Heart right ventricle (tissue), 16 donors: ENCODE measurements at regions of chr22 and their contacts with region 1.

Region 1: DNA sequence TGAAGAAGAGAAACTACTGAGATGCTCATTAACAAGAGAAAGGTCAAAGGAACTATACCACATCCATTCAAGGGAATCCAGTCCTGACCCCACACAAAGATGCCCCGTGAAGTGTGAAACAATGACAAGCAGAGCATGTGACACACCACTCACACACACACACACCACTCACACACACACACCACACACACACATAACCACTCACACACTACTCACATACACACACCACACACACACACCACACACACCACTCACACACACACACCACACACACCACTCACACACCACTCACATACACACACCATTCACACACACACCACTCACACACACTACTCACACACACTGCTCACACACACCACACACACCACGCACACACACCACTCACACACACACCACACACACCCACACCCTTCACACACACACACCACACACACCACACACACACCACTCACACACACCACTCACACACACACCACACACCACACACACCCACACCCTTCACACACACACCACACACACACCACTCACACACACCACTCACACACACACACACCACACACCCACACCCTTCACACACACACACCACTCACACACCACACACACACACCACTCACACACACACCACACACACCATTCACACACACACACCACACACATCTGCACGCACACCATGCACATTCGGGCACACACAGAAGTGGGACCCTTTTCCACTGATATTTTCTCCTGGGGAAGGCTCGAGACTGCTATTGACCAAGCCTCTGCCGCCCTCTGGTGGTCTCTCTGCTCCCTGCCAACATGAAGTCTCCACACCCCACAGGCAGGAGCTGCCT is 32.0 kb upstream of the COMT start:
- DNase-seq: peak; percentile 83 to 84
- ATAC-seq: peak; percentile 82 to 95 (median 91)
- H3K4me3 ChIP-seq: no peak overlapping the region
- H3K27ac ChIP-seq: no peak overlapping the region
- H3K4me1 ChIP-seq: no peaks in the 10 kb centered on the region
- H3K27me3 ChIP-seq: no peaks in the 10 kb centered on the region
- CTCF ChIP-seq: peak; percentile 69 to 95 (median 84)

Region 2: DNA sequence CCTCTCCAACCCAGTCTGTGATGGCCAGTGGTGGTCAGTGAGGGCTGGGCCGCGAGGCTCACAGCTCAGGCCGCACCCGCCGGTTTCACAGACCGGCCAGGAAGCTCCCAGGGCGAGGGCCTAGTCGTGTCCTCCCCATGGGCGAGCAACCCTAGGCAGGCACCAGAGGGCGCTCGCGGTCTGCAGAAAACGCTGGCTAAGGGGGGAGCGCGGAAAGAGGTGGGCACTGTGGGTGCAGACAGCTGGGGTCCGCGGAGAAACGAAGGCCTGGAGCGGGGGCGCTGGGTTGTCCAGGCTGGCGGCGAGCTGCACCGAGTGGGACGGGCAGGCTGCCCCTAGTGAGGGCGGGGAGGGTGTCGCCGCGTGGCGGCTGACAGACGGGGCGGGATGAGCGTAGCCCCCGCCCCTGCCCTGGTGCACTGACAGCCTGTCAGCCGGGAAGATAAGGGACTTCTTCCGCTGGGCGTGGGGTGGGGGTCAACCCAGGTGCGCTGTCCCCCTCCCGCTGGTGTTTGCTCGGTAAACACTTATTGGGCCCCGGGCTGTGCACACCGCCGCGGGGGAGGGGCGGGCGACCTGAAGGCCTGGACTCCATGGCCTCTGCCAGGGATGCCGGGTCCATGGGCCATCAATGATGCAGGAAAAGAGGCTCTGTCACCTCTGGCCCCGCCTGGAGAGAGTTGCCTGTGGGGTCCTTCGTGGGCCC is 178.8 kb before region 1 on chr22:
- intact Hi-C with region 1: loop called (anchors 1 to 2 kb)
- DNase-seq: peak; percentile 83 to 89
- ATAC-seq: peak; percentile 76 to 95 (median 90)
- H3K4me3 ChIP-seq: peak overlapping the region; percentile 6 to 51 (median 38)
- H3K27ac ChIP-seq: no peak overlapping the region
- H3K4me1 ChIP-seq: peaks cover 0 to 11% (median 9%) of the 10 kb centered on the region in 9 donors
- H3K27me3 ChIP-seq: peaks cover 0 to 15% (median 4%) of the 10 kb centered on the region in 7 donors
- CTCF ChIP-seq: peak; percentile 80 to 99 (median 95)

Region 3: GRCh38 chr22:19868773-19869471 is 40.6 kb before region 1 on chr22:
- intact Hi-C with region 1: loop called in 1 of 10 experiments (anchors 5 kb)
- DNase-seq: no peak
- ATAC-seq: no peak
- H3K4me3 ChIP-seq: no peak overlapping the region
- H3K27ac ChIP-seq: no peak overlapping the region
- H3K4me1 ChIP-seq: peaks cover 0 to 4% (median 0%) of the 10 kb centered on the region in 9 donors
- H3K27me3 ChIP-seq: no peaks in the 10 kb centered on the region
- CTCF ChIP-seq: no peak